ENCODE measurements at regions of chr3 and their contacts with region 1.

Region 1: GRCh38 chr3:12479919-12480425 is 4.3 kb upstream of the TSEN2 start:
- DNase-seq: peak; percentile 42
- H3K4me3 Mint-ChIP-seq: no peak overlapping the region
- H3K27ac Mint-ChIP-seq: no peak overlapping the region
- H3K4me1 Mint-ChIP-seq: peaks cover 30% of the 10 kb centered on the region
- H3K27me3 Mint-ChIP-seq: no peaks in the 10 kb centered on the region

Region 2: GRCh38 chr3:12135029-12135657 is 344.8 kb before region 1 on chr3:
- CTCF ChIA-PET with region 1: interaction called, 36 read pairs
- POLR2A ChIA-PET with region 1: no interaction called
- DNase-seq: peak; percentile 71
- H3K4me3 Mint-ChIP-seq: no peak overlapping the region
- H3K27ac Mint-ChIP-seq: no peak overlapping the region
- H3K4me1 Mint-ChIP-seq: peaks cover 1% of the 10 kb centered on the region
- H3K27me3 Mint-ChIP-seq: peaks cover 27% of the 10 kb centered on the region

Region 3: GRCh38 chr3:12462159-12462947 is 17.6 kb before region 1 on chr3:
- CTCF ChIA-PET with region 1: interaction called, 13 read pairs
- POLR2A ChIA-PET with region 1: no interaction called
- DNase-seq: peak; percentile 18
- H3K4me3 Mint-ChIP-seq: no peak overlapping the region
- H3K27ac Mint-ChIP-seq: peak overlapping the region; percentile 38
- H3K4me1 Mint-ChIP-seq: peaks cover 9% of the 10 kb centered on the region
- H3K27me3 Mint-ChIP-seq: no peaks in the 10 kb centered on the region

Region 4: GRCh38 chr3:12588039-12589009 is 108.4 kb after region 1 on chr3:
- CTCF ChIA-PET with region 1: no interaction called
- POLR2A ChIA-PET with region 1: no interaction called
- DNase-seq: no peak
- H3K4me3 Mint-ChIP-seq: no peak overlapping the region
- H3K27ac Mint-ChIP-seq: no peak overlapping the region
- H3K4me1 Mint-ChIP-seq: peaks cover under 1% of the 10 kb centered on the region
- H3K27me3 Mint-ChIP-seq: no peaks in the 10 kb centered on the region